MCF 10A (cell line): ENCODE measurements at regions of chr10 and their contacts with region 1.

Region 1: GRCh38 chr10:89301721-89302445 is at the start of gene IFIT2:
- DNase-seq: peak; percentile 69
- H3K4me3 Mint-ChIP-seq: peak within 1 kb of the TSS; percentile 73
- H3K27ac Mint-ChIP-seq: peak within 1 kb of the TSS; percentile 90
- H3K4me1 Mint-ChIP-seq: peaks cover 15% of the 10 kb centered on the region
- H3K27me3 Mint-ChIP-seq: no peaks in the 10 kb centered on the region
- CTCF ChIP-seq: no peak
- total RNA-seq, gene IFIT2: 0.58 and 1.3 TPM in 2 replicates

Region 2: GRCh38 chr10:89278034-89278535 is 23.8 kb before region 1 on chr10:
- CTCF ChIA-PET with region 1: interaction called, 6 read pairs
- POLR2A ChIA-PET with region 1: interaction called, 66 read pairs
- intact Hi-C with region 1: no loop called
- DNase-seq: peak; percentile 98
- H3K4me3 Mint-ChIP-seq: peak overlapping the region; percentile 62
- H3K27ac Mint-ChIP-seq: peak overlapping the region; percentile 100
- H3K4me1 Mint-ChIP-seq: peaks cover 53% of the 10 kb centered on the region
- H3K27me3 Mint-ChIP-seq: no peaks in the 10 kb centered on the region
- CTCF ChIP-seq: no peak

Region 3: GRCh38 chr10:89342206-89342958 is 40.5 kb after region 1 on chr10:
- CTCF ChIA-PET with region 1: interaction called, 3 read pairs
- POLR2A ChIA-PET with region 1: interaction called, 26 read pairs
- intact Hi-C with region 1: no loop called
- DNase-seq: peak; percentile 81
- H3K4me3 Mint-ChIP-seq: no peak overlapping the region
- H3K27ac Mint-ChIP-seq: no peak overlapping the region
- H3K4me1 Mint-ChIP-seq: peaks cover 36% of the 10 kb centered on the region
- H3K27me3 Mint-ChIP-seq: no peaks in the 10 kb centered on the region
- CTCF ChIP-seq: no peak

Region 4: DNA sequence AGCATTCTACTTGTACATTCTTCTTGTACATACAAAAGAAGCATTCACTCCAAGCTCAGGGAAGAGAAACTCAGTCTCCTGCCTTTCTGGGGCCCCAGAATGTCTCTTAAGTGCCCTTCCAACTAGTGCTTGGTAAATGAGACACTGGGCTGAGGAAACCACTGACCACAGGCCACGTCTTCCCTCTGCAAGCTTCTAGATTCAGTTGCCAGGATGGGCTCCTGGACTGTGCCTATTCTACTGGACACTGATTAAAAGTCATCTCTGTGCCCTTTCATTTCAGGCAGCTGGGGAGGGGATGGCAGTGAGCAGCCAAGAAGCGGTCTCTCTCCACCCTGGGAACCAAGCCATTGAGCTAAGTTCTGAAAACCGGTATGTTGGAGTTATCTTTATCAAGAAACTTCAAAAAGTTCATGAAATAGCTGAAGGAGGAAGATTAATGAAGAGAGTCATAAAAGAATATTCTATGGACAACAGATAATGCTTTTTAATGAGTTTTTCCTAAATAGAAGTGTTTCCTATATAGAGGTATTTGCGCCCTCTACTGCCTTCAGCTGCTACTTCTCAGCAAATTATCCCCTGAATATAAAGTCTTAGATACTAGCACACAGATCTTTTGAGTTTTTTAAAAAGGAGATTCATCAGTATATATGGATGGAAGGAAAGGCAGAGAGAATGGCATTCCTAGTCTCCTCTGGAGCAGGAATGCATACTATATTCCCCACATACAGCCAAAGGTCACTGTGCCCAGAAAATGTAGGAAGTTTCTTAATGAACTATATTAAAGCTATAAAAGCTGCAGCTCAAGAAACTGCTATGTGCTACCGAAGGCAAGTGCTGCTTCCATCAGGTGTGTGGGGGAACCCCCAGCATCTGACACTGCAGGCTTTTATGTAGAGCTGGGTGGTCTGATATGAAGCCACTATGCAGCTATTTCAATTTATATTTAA is 67.5 kb after region 1 on chr10:
- CTCF ChIA-PET with region 1: interaction called, 12 read pairs
- POLR2A ChIA-PET with region 1: interaction called, 9 read pairs
- intact Hi-C with region 1: loop called (anchors 2 kb)
- DNase-seq: peak; percentile 51
- H3K4me3 Mint-ChIP-seq: no peak overlapping the region
- H3K27ac Mint-ChIP-seq: no peak overlapping the region
- H3K4me1 Mint-ChIP-seq: peaks cover 5% of the 10 kb centered on the region
- H3K27me3 Mint-ChIP-seq: no peaks in the 10 kb centered on the region
- CTCF ChIP-seq: peak; percentile 51

Region 5: GRCh38 chr10:89414146-89414878 is 112.4 kb after region 1 on chr10 and contains the start of gene IFIT5:
- CTCF ChIA-PET with region 1: no interaction called
- POLR2A ChIA-PET with region 1: interaction called, 14 read pairs
- intact Hi-C with region 1: no loop called
- DNase-seq: peak; percentile 65
- H3K4me3 Mint-ChIP-seq: peak within 1 kb of the TSS; percentile 80
- H3K27ac Mint-ChIP-seq: peak within 1 kb of the TSS; percentile 94
- H3K4me1 Mint-ChIP-seq: peaks cover 14% of the 10 kb centered on the region
- H3K27me3 Mint-ChIP-seq: no peaks in the 10 kb centered on the region
- CTCF ChIP-seq: no peak
- total RNA-seq, gene IFIT5: 11.2 and 12.8 TPM in 2 replicates